Common myeloid progenitor, CD34-positive (primary cell): ENCODE measurements at regions of chr22 and their contacts with region 1.

Region 1: DNA sequence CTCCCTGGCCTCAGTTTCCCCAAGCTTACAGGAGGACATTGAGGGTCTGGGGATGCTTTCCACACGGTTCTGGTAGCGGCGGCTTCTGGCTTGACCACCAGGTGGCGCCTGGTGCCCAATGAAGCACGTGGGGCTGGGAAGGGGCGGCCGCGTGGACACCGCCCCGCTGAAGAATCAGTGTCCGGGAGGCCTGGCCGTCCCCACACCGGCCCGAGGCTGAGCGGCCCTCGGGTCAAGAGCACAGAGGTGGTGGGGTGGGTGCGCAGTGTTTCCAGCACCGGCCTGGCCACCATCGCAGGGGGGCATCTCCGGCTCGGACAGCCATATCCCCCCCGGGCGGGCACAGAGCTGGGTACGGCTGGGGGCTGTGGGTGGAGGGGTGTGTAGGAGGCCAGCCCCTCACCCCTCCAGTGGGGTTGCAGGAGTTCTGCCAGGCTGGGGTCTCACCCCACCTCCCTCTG is 27.8 kb upstream of the PPARA start:
- DNase-seq: peak; percentile 38 to 58 (median 57)
- H3K4me3 ChIP-seq: peak overlapping the region in 2 of 7 experiments; percentile 11 to 42
- H3K27ac ChIP-seq: no peak overlapping the region
- H3K4me1 ChIP-seq: peaks cover 0 to 24% (median 15%) of the 10 kb centered on the region in 4 experiments
- H3K27me3 ChIP-seq: no peaks in the 10 kb centered on the region

Region 2: GRCh38 chr22:46250035-46250782 is 127.7 kb after region 1 on chr22 and contains the start of gene CDPF1:
- CTCF ChIA-PET with region 1: interaction called, 13 read pairs
- POLR2A ChIA-PET with region 1: no interaction called
- DNase-seq: peak; percentile 88 to 93 (median 92)
- H3K4me3 ChIP-seq: peak within 1 kb of the TSS; percentile 45 to 85 (median 69)
- H3K27ac ChIP-seq: peak within 1 kb of the TSS in 1 of 2 experiments; percentile 66
- H3K4me1 ChIP-seq: peaks cover 0 to 19% (median 14%) of the 10 kb centered on the region in 4 experiments
- H3K27me3 ChIP-seq: no peaks in the 10 kb centered on the region

Region 3: GRCh38 chr22:46309526-46310085 is 187.1 kb after region 1 on chr22:
- CTCF ChIA-PET with region 1: interaction called, 70 read pairs
- POLR2A ChIA-PET with region 1: no interaction called
- DNase-seq: no peak
- H3K4me3 ChIP-seq: no peak overlapping the region
- H3K27ac ChIP-seq: no peak overlapping the region
- H3K4me1 ChIP-seq: no peaks in the 10 kb centered on the region
- H3K27me3 ChIP-seq: no peaks in the 10 kb centered on the region

Region 4: DNA sequence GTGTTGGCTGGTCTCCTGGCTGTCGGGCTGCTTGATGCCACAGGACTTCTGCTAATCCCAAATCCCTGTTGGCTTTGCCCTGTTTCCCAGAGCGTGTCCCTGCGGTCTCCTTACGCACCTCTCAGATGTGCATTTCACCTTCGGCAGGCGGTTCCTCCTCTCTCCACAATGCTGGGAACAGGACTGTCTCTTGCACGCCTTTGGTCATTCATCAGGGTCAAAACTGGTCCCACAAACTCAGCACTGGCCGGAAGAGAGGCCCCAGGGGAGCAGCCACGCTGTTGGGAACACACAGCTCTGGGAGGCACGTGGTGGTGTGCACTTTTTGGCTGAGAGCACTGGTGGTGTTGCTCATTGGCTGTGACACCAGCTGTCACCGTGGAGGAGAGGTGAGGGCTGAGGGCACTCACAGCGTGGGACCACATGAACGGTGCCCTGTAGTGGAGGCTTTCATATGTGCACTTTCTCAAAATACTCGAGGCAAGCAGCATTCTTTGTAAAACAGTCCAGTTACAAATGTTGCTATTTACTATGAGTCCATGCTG is 197.7 kb after region 1 on chr22:
- CTCF ChIA-PET with region 1: interaction called, 52 read pairs
- POLR2A ChIA-PET with region 1: no interaction called
- DNase-seq: no peak
- H3K4me3 ChIP-seq: no peak overlapping the region
- H3K27ac ChIP-seq: no peak overlapping the region
- H3K4me1 ChIP-seq: no peaks in the 10 kb centered on the region
- H3K27me3 ChIP-seq: no peaks in the 10 kb centered on the region